Activated CD4-positive, alpha-beta memory T cell treated with anti-CD3 and anti-CD28 coated beads for 36 hours (primary cell): ENCODE measurements at regions of chr12 and their contacts with region 1.

Region 1: DNA sequence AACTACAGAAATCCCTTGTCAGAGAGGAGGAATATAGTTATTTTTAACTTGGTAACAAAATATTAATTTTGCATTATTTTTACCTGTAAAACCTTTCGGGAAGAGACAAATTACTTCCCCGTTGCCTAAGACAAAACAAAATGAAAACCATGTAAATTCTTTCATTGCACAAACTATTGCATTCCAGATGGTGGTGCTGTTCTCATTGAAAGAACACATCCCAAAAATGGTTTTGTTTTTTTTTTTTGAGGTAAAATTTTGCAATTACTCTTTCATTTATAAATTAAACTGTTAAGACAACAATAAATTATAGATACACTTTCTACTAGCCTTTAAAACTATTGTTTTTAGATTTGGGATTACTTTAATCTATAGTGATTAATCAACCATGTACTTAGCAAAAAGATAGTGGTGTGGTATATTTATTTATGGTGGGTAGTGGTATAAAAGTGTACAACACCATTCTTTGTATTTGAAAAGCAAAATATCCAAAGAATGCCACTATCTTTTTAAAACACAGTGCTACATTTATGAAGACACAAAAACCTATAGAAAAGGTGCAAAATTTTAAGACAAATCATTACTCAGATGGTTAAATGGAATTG is 115.5 kb downstream of the SLC38A1 start:
- DNase-seq: no peak
- H3K4me3 Mint-ChIP-seq: no peak overlapping the region
- H3K27ac Mint-ChIP-seq: no peak overlapping the region
- H3K4me1 Mint-ChIP-seq: peaks cover 5% of the 10 kb centered on the region
- H3K27me3 Mint-ChIP-seq: peaks cover 1% of the 10 kb centered on the region

Region 2: GRCh38 chr12:46303039-46303666 is 149.8 kb after region 1 on chr12:
- CTCF ChIA-PET with region 1: interaction called, 15 read pairs
- POLR2A ChIA-PET with region 1: no interaction called
- intact Hi-C with region 1: loop called (anchors 1 kb)
- DNase-seq: peak; percentile 51
- H3K4me3 Mint-ChIP-seq: no peak overlapping the region
- H3K27ac Mint-ChIP-seq: no peak overlapping the region
- H3K4me1 Mint-ChIP-seq: peaks cover 3% of the 10 kb centered on the region
- H3K27me3 Mint-ChIP-seq: no peaks in the 10 kb centered on the region